ENCODE measurements at regions of chr22 and their contacts with region 1.

Region 1: GRCh38 chr22:19962233-19962908 is 20.8 kb upstream of the TXNRD2 start:
- DNase-seq: peak; percentile 96
- H3K4me3 ChIP-seq: no peak overlapping the region
- H3K27ac ChIP-seq: peak overlapping the region; percentile 17
- H3K4me1 ChIP-seq: peaks cover 32% of the 10 kb centered on the region
- H3K27me3 ChIP-seq: no peaks in the 10 kb centered on the region
- CTCF ChIP-seq: peak; percentile 87

Region 2: GRCh38 chr22:20013382-20013871 is 51.1 kb after region 1 on chr22:
- CTCF ChIA-PET with region 1: interaction called, 7 read pairs
- POLR2A ChIA-PET with region 1: interaction called, 4 read pairs
- intact Hi-C with region 1: loop called (anchors 2 kb)
- DNase-seq: peak; percentile 63
- H3K4me3 ChIP-seq: no peak overlapping the region
- H3K27ac ChIP-seq: no peak overlapping the region
- H3K4me1 ChIP-seq: no peaks in the 10 kb centered on the region
- H3K27me3 ChIP-seq: peaks cover 28% of the 10 kb centered on the region
- CTCF ChIP-seq: peak; percentile 84

Region 3: DNA sequence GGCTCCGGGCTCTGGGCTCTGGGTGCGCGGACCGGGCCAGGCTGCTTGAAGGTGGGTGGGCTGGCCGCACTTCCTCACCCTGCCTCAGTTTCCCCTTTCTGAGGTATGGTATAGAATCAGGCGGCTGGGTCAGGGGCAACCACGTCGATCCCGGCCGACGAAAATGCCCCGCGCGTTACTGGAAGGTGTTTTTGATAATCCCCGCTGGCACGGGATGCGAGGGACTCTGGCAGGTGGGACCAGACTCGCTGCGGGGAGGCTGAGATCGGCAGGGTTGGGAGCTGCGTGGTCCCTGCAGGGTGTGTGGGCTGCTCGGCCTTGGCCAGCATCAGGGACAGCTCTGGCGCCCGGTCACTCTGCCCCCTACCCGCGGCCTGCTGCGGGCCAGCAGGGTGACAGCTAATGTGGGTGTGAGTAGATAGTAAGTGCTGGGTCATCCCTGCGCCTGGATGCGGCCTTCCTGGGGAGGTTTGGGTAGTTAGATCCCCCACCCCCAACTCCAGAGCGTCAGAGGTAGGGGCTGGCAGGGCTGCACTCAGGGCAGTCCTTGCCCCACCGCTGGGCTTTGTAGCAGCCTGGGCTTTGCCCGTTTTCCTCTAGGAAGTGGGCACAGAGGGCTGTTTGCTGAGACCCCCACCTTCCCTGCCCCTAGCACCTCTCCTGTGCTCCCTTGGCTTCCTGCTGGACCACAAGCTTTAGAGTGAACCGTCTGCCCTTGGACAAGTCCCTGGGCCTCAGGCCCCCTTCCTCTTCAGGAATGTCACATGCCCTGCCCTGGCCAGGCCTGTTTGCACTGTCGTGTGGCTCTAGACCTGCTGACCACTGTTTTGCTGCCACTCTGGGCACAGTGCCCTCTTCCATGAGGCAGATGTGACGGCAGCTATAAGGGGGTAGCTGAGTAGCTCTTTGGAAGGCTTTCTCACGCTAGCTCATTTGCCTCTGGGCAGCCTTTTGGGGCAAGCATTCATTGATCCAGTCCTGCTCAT is 59.1 kb after region 1 on chr22:
- CTCF ChIA-PET with region 1: interaction called, 11 read pairs
- POLR2A ChIA-PET with region 1: no interaction called
- intact Hi-C with region 1: no loop called
- DNase-seq: no peak
- H3K4me3 ChIP-seq: peak overlapping the region; percentile 86
- H3K27ac ChIP-seq: peak overlapping the region; percentile 78
- H3K4me1 ChIP-seq: peaks cover 5% of the 10 kb centered on the region
- H3K27me3 ChIP-seq: peaks cover 13% of the 10 kb centered on the region
- CTCF ChIP-seq: no peak

Region 4: DNA sequence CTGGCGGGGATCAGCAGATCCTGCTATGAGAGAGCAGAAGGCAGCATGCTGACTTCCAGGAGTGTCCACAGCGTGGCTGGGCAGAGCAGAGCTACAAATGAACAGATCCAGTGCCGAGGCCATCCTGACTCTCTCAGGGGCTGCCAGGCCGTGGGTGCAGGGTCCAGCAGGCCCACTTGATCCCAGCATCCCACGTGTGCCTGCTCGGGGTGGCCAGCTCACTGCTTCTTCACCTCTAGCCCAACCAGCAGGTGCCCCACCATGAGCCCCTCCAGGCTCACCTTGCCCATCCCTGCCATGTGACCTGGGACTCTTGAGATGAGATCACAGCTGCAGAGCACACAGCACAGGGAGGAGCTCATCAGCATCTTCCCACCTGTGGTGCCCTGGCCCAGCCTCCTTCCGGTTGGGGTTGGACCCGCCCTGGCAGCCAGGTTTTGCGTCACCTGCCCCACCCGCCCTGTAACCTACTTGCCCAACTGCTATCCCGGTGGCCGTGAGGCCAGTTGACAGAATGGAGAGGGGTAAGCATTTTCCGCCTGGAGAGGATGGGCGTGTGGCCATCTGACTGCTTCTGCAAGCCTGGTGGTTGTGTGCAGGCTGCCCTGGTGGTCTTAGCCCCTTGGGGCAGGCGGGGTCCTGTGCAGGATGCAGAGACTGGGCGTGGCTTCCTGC is 69.5 kb after region 1 on chr22:
- CTCF ChIA-PET with region 1: no interaction called
- POLR2A ChIA-PET with region 1: no interaction called
- intact Hi-C with region 1: no loop called
- DNase-seq: no peak
- H3K4me3 ChIP-seq: no peak overlapping the region
- H3K27ac ChIP-seq: no peak overlapping the region
- H3K4me1 ChIP-seq: no peaks in the 10 kb centered on the region
- H3K27me3 ChIP-seq: no peaks in the 10 kb centered on the region
- CTCF ChIP-seq: no peak

Region 5: DNA sequence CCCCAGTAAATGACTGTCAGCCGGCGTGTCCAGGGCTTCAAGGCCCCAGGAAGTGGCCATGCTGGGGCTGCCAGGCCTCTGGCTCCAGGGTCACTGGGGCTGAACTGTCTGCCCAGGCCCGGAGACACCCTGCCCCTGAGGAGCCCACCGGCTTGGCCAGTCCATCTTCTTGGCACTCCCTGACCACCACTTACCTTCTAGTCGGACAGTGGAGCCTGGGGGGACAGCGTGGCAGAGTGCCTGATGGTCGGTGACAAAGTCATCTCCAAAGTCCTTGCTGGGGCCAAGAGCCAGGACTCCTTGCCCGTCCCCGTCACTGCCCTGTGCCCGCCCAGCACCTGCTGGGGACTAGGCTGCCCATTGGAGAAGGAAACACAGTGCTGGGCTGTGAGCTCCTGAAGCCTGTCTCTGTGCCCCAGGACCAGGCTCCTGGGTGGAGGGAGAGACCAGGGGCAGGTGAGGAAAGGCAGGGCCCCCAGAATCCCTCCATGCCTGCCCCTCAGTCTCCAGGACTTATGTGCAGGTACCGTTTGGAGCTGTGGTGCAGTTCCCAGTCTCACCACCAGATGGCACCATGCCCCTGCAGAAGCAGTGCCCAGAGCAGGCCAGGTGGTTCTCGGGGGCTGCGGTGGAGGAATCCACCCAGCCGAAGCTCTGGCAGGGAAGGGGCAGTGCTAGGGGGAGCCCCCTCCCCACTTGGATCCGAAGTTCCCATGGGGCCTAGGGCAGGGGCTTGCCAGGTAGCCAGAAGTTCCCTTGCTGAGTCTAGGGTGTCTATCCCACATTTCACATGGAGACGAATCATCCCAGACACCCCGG is 194.4 kb after region 1 on chr22:
- CTCF ChIA-PET with region 1: no interaction called
- POLR2A ChIA-PET with region 1: no interaction called
- intact Hi-C with region 1: no loop called
- DNase-seq: peak; percentile 81
- H3K4me3 ChIP-seq: no peak overlapping the region
- H3K27ac ChIP-seq: no peak overlapping the region
- H3K4me1 ChIP-seq: no peaks in the 10 kb centered on the region
- H3K27me3 ChIP-seq: no peaks in the 10 kb centered on the region
- CTCF ChIP-seq: peak; percentile 97